Head of caudate nucleus (tissue), 42 donors: ENCODE measurements at regions of chr22 and their contacts with region 1.

Region 1: GRCh38 chr22:41940832-41941765 is 5.9 kb downstream of the CENPM start:
- DNase-seq: peak; percentile 78 to 96 (median 90)

Region 2: GRCh38 chr22:41697126-41697775 is 243.8 kb before region 1 on chr22:
- intact Hi-C with region 1: loop called (anchors 2 kb)
- DNase-seq: peak; percentile 81 to 99 (median 94)

Region 3: GRCh38 chr22:41832553-41833368 is 108.3 kb before region 1 on chr22 and contains the start of gene SREBF2:
- intact Hi-C with region 1: loop called (anchors 2 kb)
- DNase-seq: peak; percentile 99 to 100 (median 100)

Region 4: DNA sequence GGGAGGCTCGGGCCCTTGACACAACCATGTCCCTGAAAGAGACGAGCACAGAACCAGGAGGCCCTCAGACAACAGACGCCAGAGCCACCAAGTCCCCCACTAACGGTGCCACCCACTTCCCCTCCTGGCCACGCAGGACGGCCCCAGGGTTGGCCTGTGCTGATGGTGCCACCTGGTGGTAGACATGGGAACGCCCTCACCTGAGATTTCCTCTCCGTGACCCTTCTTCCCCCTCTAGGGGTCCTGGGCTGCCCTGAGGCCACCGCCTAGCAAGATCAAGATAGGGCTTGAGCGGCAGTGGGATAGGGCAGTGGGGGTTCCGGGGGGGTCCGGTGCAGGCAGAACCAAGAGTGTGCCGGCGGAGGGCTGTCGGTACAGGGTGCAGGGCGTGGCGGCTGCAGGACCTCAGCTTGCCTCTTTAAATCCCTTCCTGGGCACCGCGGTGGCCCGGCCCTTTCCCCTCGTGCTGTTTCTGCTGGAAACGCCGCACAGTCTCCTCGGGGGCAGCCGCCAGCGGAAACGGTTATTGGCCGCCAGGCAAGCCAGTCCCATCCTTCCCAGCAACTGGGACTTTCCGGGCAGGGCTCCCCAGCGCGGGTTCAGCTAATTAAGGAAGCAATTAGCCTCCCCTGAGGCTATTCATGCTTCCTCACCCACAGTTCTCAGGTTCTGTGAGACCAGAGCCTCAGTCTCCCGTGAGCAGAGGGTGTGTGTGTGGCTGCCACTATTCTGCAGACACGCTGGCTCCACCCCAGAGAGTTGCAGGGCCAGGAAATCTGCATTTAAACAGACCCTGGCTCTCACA is 496.6 kb after region 1 on chr22:
- intact Hi-C with region 1: no loop called
- DNase-seq: peak; percentile 56 to 91 (median 78)

Region 5: DNA sequence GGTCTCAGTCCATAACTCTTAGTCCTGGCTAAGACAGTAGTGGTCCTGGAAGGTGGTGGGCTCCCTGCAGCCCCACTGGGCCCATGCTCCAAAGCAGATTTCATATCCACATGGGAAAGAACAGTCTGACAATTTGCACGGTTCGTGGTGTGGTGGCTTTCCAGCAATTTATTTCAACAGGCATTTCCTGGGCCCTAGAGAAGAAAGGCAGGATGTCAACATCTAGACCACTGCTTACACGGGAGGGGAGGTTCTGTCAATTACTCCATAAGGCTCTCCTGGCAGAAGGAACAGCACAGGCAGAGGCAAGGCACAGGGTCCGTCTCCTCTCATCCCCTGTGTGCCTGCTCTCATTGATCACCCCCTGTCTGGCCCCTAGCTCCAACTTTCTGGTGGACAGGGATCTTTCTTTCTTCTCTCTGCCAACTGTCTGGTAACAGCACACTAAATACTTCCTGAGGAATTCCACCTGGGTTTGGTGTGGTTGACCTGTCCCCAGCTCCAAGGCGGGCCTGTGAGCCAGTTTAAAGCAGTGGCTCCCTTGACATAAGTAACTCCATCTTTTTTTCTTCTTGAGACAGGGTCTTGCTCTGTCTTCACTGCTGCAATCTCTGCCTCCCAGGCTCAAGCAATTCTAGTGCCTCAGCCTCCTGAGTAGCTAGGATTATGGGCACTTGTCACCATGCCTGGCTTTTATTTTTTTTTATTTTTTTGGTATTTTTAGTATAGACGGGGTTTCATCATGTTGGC is 784.7 kb after region 1 on chr22:
- intact Hi-C with region 1: no loop called
- DNase-seq: no peak